Adrenal gland (tissue), 19 donors: ENCODE measurements at regions of chr10 and their contacts with region 1.

Region 1: DNA sequence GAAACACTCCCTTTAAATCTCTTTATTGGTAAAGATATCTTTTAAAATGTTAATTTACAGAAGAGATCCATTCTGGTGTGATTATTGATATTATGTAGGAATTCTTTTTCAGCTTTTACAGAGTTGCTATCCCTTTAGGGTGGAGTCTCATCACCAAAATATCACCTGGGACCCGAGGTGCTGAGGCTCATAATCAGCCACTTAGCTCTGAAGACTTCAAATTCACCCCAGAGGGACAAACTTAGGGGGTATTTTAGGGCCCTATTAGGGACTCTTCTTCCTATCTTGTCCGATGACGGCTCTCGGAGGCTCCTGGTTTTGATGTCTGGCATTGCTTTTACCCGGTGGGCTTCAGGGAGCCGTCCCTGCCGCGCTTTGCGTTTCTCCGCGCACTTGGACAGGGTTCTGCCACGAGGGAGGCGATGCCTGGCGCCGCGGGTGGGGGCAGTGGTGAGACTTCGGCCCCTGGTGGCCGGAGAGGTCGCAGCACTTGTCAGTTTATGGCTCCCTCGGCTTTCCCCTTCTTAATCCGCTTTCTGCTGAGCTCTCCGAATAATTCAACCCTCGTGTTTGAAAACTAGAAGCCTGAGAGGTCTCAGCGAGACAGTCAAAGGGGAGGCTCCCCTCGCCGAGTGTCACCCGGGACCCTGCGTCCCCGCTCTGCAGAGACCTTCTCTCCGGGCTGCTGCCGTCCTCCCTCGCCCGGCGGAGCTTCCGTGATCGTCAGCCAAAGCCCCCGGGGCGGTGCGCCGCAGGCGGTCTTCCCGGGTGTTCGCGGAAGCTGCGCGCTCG is 27.8 kb downstream of the RBM20 start:
- DNase-seq: peak; percentile 67 to 79 (median 75)
- H3K4me3 ChIP-seq: peak overlapping the region; percentile 2 to 81 (median 44)
- H3K27ac ChIP-seq: peak overlapping the region in 2 of 5 donors; percentile 29 to 79
- H3K4me1 ChIP-seq: peaks cover 0 to 5% of the 10 kb centered on the region in 2 donors
- H3K27me3 ChIP-seq: no peaks in the 10 kb centered on the region
- CTCF ChIP-seq: peak; percentile 59 to 94 (median 72)
- POLR2A ChIP-seq: no peak

Region 2: GRCh38 chr10:110556969-110557601 is 114.9 kb before region 1 on chr10:
- intact Hi-C with region 1: no loop called
- DNase-seq: peak in 4 of 7 donors; percentile 41 to 68 (median 48)
- H3K4me3 ChIP-seq: no peak overlapping the region
- H3K27ac ChIP-seq: no peak overlapping the region
- H3K4me1 ChIP-seq: no peaks in the 10 kb centered on the region
- H3K27me3 ChIP-seq: no peaks in the 10 kb centered on the region
- CTCF ChIP-seq: peak; percentile 31 to 69 (median 46)
- POLR2A ChIP-seq: no peak

Region 3: DNA sequence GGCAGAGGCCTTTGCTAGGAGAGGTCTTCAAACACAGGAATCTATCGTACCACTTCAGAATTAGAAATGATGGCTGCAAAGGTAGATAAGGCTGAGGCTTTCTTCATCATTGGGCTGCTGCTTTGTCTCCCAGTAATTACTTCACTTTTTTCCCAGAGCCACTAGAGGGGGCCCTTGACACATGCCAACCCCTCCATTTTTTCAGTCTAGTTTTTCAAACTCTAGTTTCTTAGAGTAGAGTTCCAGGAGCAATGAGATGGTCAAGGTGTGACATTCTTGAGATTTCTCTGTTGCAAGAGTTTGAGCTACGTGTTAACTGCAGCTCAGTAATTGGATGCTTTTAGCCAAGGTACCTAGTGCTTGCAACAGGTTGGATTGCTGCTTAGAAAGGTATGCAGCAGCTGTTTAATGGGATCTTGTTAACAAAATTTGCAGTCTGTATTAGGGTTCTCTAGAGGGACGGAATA is 61.6 kb before region 1 on chr10:
- intact Hi-C with region 1: loop called in 1 of 2 experiments (anchors 10 kb)
- DNase-seq: peak in 6 of 7 donors; percentile 29 to 58 (median 41)
- H3K4me3 ChIP-seq: no peak overlapping the region
- H3K27ac ChIP-seq: no peak overlapping the region
- H3K4me1 ChIP-seq: no peaks in the 10 kb centered on the region
- H3K27me3 ChIP-seq: no peaks in the 10 kb centered on the region
- CTCF ChIP-seq: peak; percentile 52 to 80 (median 66)
- POLR2A ChIP-seq: no peak

Region 4: DNA sequence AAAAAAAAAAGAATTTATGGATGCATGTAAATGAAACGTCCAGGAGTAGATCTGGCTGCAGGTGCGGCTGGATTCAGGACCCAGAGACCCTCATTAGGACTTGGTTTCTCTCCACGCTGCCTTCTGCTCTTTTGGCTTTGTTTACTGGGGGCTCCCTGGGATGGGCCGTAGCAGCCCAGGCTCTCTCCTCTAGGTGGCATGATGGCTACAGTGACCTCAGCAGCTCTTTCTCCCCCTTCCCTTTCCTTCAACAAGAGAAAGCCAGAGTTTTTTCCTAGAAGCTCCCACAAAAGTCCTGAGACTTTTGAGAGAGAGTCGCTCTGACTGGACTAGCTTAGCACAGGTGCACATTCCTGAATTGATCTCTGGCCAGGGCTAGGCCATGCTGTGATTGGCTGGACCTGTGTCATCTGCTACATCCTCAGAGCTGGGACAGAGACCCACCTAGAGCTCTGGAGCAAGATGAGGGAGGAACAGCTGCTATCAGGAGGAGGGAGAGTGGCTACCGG is 131.9 kb after region 1 on chr10:
- intact Hi-C with region 1: no loop called
- DNase-seq: peak in 6 of 7 donors; percentile 47 to 79 (median 66)
- H3K4me3 ChIP-seq: no peak overlapping the region
- H3K27ac ChIP-seq: no peak overlapping the region
- H3K4me1 ChIP-seq: peaks cover 0 to 8% of the 10 kb centered on the region in 2 donors
- H3K27me3 ChIP-seq: no peaks in the 10 kb centered on the region
- CTCF ChIP-seq: peak; percentile 36 to 78 (median 66)
- POLR2A ChIP-seq: no peak